Mucosa of descending colon (tissue), 3 donors: ENCODE measurements at regions of chr19 and their contacts with region 1.

Region 1: DNA sequence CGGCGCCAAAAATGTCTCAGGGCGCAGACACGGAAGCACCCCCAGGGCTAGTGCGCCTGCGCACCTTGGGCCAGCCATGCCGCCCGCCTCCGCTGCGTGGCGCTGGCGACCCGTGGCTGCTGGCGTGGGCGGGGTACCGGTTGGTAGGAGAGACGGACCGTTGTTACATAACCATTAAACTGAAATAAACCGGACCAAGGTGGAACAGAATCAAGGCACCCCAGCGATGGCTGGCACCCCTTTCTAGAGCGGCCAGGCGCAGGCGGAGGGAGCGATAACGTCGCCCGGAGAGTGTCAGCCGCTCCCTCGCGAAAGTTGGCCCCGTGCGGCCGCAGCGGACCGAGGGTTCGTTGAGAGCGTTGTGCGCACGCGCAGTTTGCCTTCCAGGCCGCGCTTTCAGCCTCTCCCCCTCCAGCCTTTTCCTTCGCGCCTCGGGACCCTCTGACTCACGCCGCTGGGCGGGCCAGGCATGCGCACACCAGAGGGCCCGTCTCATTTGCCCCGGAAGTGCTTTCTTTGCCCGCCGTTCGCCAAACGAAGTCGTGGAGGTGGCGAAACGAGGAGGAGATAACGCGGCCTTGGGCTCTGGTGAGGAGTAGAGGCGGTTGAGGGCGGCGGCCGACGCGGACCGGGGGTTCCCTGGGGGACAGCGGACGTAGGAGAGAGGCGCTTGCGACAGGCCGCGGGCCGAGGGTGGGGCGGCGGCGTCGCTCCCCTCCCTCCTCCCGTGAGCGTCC is at the starts of genes PLEKHJ1 and SF3A2:
- DNase-seq: peak; percentile 93 to 100 (median 98)
- ATAC-seq: peak; percentile 88
- H3K4me3 ChIP-seq: peak within 1 kb of the TSS; percentile 92
- H3K4me1 ChIP-seq: peaks cover 49% of the 10 kb centered on the region
- CTCF ChIP-seq: peak; percentile 100
- total RNA-seq, gene PLEKHJ1: 132 to 231 (median 189) TPM
- total RNA-seq, gene SF3A2: 60.6 to 81.2 (median 68.2) TPM

Region 2: DNA sequence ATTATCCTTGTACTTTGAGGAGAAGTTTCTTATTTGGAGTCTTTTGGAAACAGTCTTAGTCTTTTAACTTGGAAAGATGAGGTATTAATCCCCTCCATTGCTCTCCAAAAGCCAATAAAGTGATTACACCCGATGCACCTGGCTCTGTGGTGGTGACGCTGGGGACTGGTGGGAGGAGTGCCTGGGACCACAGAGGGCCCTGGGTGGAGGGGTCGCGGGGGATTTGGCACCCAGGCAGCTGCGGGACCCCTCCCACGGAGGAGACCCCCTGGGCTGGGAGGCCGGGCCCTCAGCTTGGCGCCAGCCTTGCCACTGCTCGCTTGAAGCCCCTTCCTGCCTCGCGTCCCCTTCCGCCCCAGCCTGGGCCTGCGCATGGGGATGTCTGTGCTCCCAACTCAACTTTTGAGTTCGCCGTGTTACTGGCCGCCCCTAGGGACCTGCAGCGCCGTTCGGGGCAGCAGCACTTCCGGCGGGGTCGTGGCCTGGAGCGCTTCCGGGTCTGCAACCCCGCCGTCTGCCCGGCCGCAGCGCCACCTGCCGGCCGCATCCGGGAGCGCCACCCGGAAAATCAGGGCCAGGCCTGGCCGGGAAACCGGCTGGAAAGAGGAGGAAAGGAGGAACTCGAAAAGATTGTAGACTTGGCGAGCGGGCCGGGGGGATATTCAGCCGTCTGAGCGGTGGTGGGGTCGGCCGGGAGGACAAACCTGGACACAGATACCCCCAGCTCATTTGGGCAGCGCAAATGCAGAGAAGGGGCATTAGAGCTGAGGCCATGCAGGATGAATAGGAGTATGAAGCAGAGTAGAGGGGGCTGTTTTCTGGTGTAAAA is 37.1 kb after region 1 on chr19:
- intact Hi-C with region 1: loop called in 1 of 2 experiments (anchors 5 kb)
- DNase-seq: peak; percentile 82 to 92 (median 91)
- ATAC-seq: peak; percentile 46
- H3K4me3 ChIP-seq: no peak overlapping the region
- H3K4me1 ChIP-seq: peaks cover 55% of the 10 kb centered on the region
- CTCF ChIP-seq: peak; percentile 91

Region 3: DNA sequence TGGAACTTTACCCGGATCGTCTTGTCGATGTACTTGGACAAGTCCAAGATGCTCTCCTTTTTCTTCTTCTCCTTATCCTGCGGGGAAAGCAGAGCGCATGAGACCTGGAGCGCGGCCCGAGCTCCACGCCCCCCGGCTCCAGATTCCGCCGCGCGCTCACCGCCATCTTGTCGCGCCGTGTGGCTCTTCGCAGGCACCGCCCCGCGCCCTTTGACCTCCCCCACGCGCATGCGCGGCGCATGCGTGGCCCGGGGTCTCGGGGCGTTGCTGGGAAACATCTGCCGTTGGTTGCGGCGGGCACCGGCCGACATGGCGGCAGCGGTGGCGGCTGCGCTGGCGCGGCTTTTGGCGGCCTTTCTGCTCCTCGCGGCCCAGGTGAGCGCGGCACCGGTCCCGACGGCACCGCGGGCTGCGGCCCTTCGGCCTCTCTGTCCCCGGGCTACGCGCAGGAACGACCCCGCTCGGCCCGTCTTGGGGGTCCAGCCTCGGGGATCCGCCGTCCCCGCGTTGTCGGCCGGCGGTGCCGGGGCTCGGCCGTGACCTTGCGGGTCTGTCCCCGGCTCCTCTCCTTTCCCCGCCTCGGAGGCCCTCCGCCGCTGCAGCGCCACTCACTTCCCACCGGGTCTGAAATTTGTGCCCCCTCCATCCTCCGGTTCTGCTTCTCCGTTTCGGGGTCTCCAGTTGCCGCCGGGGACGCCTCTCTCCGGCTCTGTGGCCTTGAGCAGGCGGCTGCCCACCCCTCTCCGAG is 92.1 kb after region 1 on chr19 and contains the starts of genes LSM7 and SPPL2B:
- intact Hi-C with region 1: loop called in 1 of 2 experiments (anchors 10 kb)
- DNase-seq: peak; percentile 91 to 96 (median 94)
- ATAC-seq: peak; percentile 68
- H3K4me3 ChIP-seq: peak within 1 kb of the TSS; percentile 98
- H3K4me1 ChIP-seq: peaks cover 51% of the 10 kb centered on the region
- CTCF ChIP-seq: no peak
- total RNA-seq, gene LSM7: 60.3 to 111 (median 93.1) TPM
- total RNA-seq, gene SPPL2B: 119 to 177 (median 153) TPM